ENCODE measurements at regions of chr22 and their contacts with region 1.

Region 1: GRCh38 chr22:42033263-42034181 is 34.9 kb downstream of the WBP2NL start:
- DNase-seq: no peak
- H3K4me3 ChIP-seq: no peak overlapping the region
- H3K27ac ChIP-seq: no peak overlapping the region
- H3K4me1 ChIP-seq: no peaks in the 10 kb centered on the region
- H3K27me3 ChIP-seq: no peaks in the 10 kb centered on the region
- CTCF ChIP-seq: no peak

Region 2: GRCh38 chr22:41951898-41952474 is 81.5 kb before region 1 on chr22 and contains the start of gene SMIM45:
- CTCF ChIA-PET with region 1: no interaction called
- POLR2A ChIA-PET with region 1: no interaction called
- intact Hi-C with region 1: no loop called
- DNase-seq: no peak
- H3K4me3 ChIP-seq: no peak within 1 kb of the TSS
- H3K27ac ChIP-seq: no peak within 1 kb of the TSS
- H3K4me1 ChIP-seq: peaks cover 7% of the 10 kb centered on the region
- H3K27me3 ChIP-seq: no peaks in the 10 kb centered on the region
- CTCF ChIP-seq: no peak

Region 3: DNA sequence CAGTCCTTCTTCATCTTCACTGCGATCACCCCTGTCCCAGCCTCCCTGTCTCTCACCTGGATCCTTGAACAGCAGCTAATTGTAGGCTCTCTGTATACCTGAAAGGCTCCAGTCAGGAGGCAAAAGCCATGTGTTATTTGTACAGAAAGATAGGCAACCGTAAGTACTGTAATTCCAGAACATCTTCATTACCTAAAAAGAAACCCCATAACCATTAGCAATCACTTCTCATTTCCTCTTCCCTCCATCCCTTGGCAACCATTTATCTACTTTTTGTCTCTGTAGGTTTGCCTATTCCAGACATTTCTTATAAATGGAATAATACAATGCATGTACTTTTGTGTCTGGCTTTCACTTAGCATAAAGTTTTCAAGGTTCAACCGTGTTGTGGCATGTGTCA is 19.2 kb after region 1 on chr22:
- CTCF ChIA-PET with region 1: no interaction called
- POLR2A ChIA-PET with region 1: interaction called, 24 read pairs
- intact Hi-C with region 1: no loop called
- DNase-seq: no peak
- H3K4me3 ChIP-seq: no peak overlapping the region
- H3K27ac ChIP-seq: no peak overlapping the region
- H3K4me1 ChIP-seq: no peaks in the 10 kb centered on the region
- H3K27me3 ChIP-seq: no peaks in the 10 kb centered on the region
- CTCF ChIP-seq: no peak

Region 4: GRCh38 chr22:42069801-42070516 is 36.4 kb after region 1 on chr22:
- CTCF ChIA-PET with region 1: no interaction called
- POLR2A ChIA-PET with region 1: no interaction called
- intact Hi-C with region 1: no loop called
- DNase-seq: no peak
- H3K4me3 ChIP-seq: peak overlapping the region; percentile 59
- H3K27ac ChIP-seq: peak overlapping the region; percentile 10
- H3K4me1 ChIP-seq: peaks cover 16% of the 10 kb centered on the region
- H3K27me3 ChIP-seq: no peaks in the 10 kb centered on the region
- CTCF ChIP-seq: no peak

Measured in PC-9 (cell line).